ENCODE measurements at regions of chr13 and their contacts with region 1.

Region 1: DNA sequence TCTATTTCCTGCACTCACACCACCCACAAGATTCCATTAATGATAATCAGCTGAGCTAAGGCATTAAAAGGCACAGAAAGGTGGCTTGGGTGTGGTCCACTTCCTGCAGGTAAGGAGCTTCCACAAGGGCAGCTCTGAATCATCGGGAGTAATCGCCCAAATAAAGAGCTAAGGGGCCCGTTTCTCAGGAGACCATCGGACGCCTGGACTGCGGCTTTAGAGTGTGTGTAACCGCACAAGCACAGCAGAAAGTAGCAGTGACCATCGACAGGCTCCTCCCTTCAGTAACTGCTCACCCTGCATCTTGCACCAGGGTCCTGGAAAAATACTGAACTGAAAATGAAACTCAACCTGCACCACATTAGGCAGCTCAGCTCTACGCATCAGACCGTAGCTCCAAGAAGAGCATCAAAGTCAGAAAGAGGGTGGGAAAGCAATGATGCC is 6.0 kb downstream of the STK24 start:
- DNase-seq: peak in 5 of 9 experiments; percentile 32 to 70 (median 52)
- ATAC-seq: peak; percentile 62
- H3K4me3 ChIP-seq: peak overlapping the region; percentile 51 to 55
- H3K4me3 Mint-ChIP-seq: peak overlapping the region; percentile 90
- H3K27ac ChIP-seq: peak overlapping the region; percentile 46 to 68
- H3K27ac Mint-ChIP-seq: peak overlapping the region; percentile 97
- H3K4me1 ChIP-seq: peaks cover 88% of the 10 kb centered on the region
- H3K4me1 Mint-ChIP-seq: peaks cover 93% of the 10 kb centered on the region
- H3K27me3 ChIP-seq: no peaks in the 10 kb centered on the region
- H3K27me3 Mint-ChIP-seq: no peaks in the 10 kb centered on the region
- CTCF ChIP-seq: no peak

Region 2: DNA sequence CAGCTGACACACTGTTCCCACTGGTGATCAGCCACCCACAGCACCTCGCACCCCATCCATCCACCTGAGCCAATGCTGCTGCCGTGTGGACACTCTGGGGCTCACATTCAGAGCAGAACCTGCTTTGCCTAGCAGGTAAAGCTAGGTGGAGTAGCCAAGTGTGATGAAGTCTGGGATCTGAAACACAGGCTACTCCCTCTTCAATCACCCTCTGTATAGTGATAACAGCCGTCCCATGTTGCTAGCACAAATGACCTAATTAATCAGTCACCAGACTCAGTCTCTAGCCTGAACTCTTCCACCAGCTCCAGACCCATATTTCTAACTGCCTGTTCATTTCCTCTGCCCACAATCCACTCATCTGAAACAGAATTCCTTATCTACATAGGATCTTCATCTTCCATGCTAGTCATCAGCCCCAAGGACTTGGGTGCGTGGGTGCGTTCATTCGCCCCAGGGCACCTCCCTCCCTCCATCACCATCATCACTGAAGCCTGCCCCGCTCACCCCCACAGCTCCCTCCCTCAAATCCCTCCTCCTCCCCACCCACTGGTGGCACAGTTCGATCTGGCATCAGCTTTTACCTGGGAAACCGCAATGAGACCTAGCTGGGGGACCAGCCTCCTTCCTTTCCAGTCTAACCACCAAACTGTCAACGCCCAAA is 13.9 kb before region 1 on chr13:
- CTCF ChIA-PET with region 1: interaction called, 3 read pairs
- POLR2A ChIA-PET with region 1: no interaction called
- intact Hi-C with region 1: loop called in 1 of 2 experiments (anchors 2 kb)
- DNase-seq: peak in 1 of 9 experiments; percentile 25
- ATAC-seq: peak; percentile 55
- H3K4me3 ChIP-seq: no peak overlapping the region
- H3K4me3 Mint-ChIP-seq: peak overlapping the region; percentile 60
- H3K27ac ChIP-seq: no peak overlapping the region
- H3K27ac Mint-ChIP-seq: peak overlapping the region; percentile 76
- H3K4me1 ChIP-seq: peaks cover 33% of the 10 kb centered on the region
- H3K4me1 Mint-ChIP-seq: peaks cover 81% of the 10 kb centered on the region
- H3K27me3 ChIP-seq: no peaks in the 10 kb centered on the region
- H3K27me3 Mint-ChIP-seq: no peaks in the 10 kb centered on the region
- CTCF ChIP-seq: no peak